ENCODE measurements at regions of chr16 and their contacts with region 1.

Region 1: GRCh38 chr16:72664509-72665225 is 383.3 kb downstream of the ZFHX3 start:
- DNase-seq: peak; percentile 97
- H3K4me3 Mint-ChIP-seq: peak overlapping the region; percentile 99
- H3K27ac Mint-ChIP-seq: peak overlapping the region; percentile 88
- H3K4me1 Mint-ChIP-seq: peaks cover 9% of the 10 kb centered on the region
- H3K27me3 Mint-ChIP-seq: peaks cover 2% of the 10 kb centered on the region

Region 2: GRCh38 chr16:72203401-72203800 is 461.3 kb before region 1 on chr16:
- CTCF ChIA-PET with region 1: no interaction called
- POLR2A ChIA-PET with region 1: no interaction called
- intact Hi-C with region 1: loop called (anchors 5 kb)
- DNase-seq: peak; percentile 49
- H3K4me3 Mint-ChIP-seq: no peak overlapping the region
- H3K27ac Mint-ChIP-seq: no peak overlapping the region
- H3K4me1 Mint-ChIP-seq: peaks cover 10% of the 10 kb centered on the region
- H3K27me3 Mint-ChIP-seq: peaks cover 18% of the 10 kb centered on the region

Region 3: GRCh38 chr16:72493716-72494415 is 170.8 kb before region 1 on chr16:
- CTCF ChIA-PET with region 1: no interaction called
- POLR2A ChIA-PET with region 1: no interaction called
- intact Hi-C with region 1: loop called (anchors 5 kb)
- DNase-seq: no peak
- H3K4me3 Mint-ChIP-seq: no peak overlapping the region
- H3K27ac Mint-ChIP-seq: no peak overlapping the region
- H3K4me1 Mint-ChIP-seq: peaks cover 5% of the 10 kb centered on the region
- H3K27me3 Mint-ChIP-seq: no peaks in the 10 kb centered on the region

Region 4: GRCh38 chr16:72621651-72622050 is 43.0 kb before region 1 on chr16:
- CTCF ChIA-PET with region 1: no interaction called
- POLR2A ChIA-PET with region 1: no interaction called
- intact Hi-C with region 1: no loop called
- DNase-seq: no peak
- H3K4me3 Mint-ChIP-seq: no peak overlapping the region
- H3K27ac Mint-ChIP-seq: no peak overlapping the region
- H3K4me1 Mint-ChIP-seq: no peaks in the 10 kb centered on the region
- H3K27me3 Mint-ChIP-seq: no peaks in the 10 kb centered on the region

Region 5: GRCh38 chr16:72787514-72788268 is 123.0 kb after region 1 on chr16:
- CTCF ChIA-PET with region 1: no interaction called
- POLR2A ChIA-PET with region 1: no interaction called
- intact Hi-C with region 1: loop called (anchors 1 kb)
- DNase-seq: peak; percentile 79
- H3K4me3 Mint-ChIP-seq: peak overlapping the region; percentile 60
- H3K27ac Mint-ChIP-seq: no peak overlapping the region
- H3K4me1 Mint-ChIP-seq: peaks cover 16% of the 10 kb centered on the region
- H3K27me3 Mint-ChIP-seq: peaks cover 30% of the 10 kb centered on the region

Region 6: GRCh38 chr16:72877374-72878028 is 212.8 kb after region 1 on chr16:
- CTCF ChIA-PET with region 1: no interaction called
- POLR2A ChIA-PET with region 1: no interaction called
- intact Hi-C with region 1: no loop called
- DNase-seq: no peak
- H3K4me3 Mint-ChIP-seq: no peak overlapping the region
- H3K27ac Mint-ChIP-seq: no peak overlapping the region
- H3K4me1 Mint-ChIP-seq: no peaks in the 10 kb centered on the region
- H3K27me3 Mint-ChIP-seq: peaks cover 12% of the 10 kb centered on the region

Region 7: DNA sequence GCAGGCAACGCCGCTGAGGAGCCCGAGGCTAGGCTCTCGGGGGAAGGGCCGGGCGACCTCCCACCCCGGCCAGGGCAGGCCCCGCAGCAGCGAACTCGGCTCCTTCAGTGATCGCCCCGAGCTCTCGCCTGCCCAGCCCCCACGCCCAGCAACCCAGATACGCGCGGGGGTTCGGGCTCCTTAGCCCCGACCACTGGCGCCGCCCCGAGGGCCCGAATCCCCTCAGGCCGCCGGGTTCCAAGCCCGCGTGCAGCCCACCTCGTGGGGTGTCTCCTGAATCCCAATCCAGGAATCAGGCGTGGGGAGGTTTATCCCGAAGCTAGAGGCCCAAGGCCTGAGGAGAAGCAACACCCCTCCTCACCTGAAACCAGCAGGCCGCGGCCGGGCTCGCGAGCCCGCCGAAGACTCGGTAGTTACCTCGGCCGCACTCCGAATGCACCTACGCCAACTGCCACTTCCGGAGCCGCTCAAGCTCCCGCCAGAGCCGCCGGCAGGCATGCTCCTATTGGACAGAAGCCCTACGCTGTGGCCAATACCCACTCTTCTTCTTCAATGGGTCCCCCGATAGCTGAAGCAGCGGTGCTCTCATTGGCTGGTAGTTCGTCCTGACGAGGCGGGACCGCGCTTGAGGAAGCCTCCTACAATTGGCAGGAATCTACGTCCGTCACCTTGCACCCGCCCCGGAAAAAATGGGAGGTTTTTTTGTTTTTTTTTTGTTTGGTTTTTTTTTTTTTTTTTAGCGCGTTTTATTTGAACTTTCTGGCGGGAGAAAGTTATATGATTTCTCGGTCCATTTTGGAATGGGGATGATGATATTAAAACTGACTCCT is 2002.0 kb after region 1 on chr16 and contains the start of gene RFWD3:
- CTCF ChIA-PET with region 1: no interaction called
- POLR2A ChIA-PET with region 1: no interaction called
- intact Hi-C with region 1: loop called (anchors 10 kb)
- DNase-seq: peak; percentile 98
- H3K4me3 Mint-ChIP-seq: peak within 1 kb of the TSS; percentile 85
- H3K27ac Mint-ChIP-seq: peak within 1 kb of the TSS; percentile 91
- H3K4me1 Mint-ChIP-seq: peaks cover 39% of the 10 kb centered on the region
- H3K27me3 Mint-ChIP-seq: no peaks in the 10 kb centered on the region
- total RNA-seq, gene RFWD3: 95.3 to 109 TPM

Measured in activated CD4-positive, alpha-beta memory T cell treated with anti-CD3 and anti-CD28 coated beads for 36 hours (primary cell).